ENCODE measurements at regions of chr14 and their contacts with region 1.

Region 1: GRCh38 chr14:29716150-29716549 is 211.5 kb downstream of the PRKD1 start:
- DNase-seq: no peak
- H3K4me3 ChIP-seq: no peak overlapping the region
- H3K27ac ChIP-seq: no peak overlapping the region
- H3K4me1 ChIP-seq: no peaks in the 10 kb centered on the region
- H3K27me3 ChIP-seq: no peaks in the 10 kb centered on the region
- CTCF ChIP-seq: no peak

Region 2: DNA sequence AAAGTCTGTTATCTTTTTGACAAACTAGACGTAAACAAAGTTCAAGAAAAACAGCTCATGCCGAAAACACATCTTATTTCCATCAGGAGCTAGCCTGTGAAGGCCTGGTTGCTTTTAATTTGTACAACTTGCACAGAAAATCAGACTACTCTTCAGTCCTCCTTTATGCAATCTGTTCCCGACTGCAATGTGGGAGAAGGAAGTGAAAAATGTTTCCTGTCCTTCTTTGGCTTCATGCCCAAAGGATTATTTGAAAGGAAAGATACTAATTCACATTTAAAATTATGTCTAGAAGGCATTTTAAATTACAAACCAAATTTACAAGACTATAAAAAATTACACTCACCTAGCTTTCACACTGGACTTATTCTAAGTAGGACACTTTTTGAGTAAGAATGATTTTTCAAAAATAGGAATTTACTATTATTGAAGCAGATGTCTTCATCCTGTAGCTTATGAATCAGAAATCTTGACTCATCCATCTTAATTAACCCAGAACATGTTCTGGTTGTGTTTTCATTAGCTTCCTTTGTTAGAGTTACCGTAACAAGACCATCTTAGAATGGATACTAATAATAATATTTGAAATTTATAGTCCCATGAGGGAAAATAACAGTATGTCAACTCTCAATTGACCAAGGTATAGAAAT is 61.1 kb before region 1 on chr14:
- CTCF ChIA-PET with region 1: no interaction called
- dilution Hi-C with region 1: no loop called
- in situ Hi-C with region 1: no loop called
- intact Hi-C with region 1: no loop called
- DNase-seq: peak; percentile 28
- H3K4me3 ChIP-seq: no peak overlapping the region
- H3K27ac ChIP-seq: no peak overlapping the region
- H3K4me1 ChIP-seq: no peaks in the 10 kb centered on the region
- H3K27me3 ChIP-seq: no peaks in the 10 kb centered on the region
- CTCF ChIP-seq: no peak

Region 3: DNA sequence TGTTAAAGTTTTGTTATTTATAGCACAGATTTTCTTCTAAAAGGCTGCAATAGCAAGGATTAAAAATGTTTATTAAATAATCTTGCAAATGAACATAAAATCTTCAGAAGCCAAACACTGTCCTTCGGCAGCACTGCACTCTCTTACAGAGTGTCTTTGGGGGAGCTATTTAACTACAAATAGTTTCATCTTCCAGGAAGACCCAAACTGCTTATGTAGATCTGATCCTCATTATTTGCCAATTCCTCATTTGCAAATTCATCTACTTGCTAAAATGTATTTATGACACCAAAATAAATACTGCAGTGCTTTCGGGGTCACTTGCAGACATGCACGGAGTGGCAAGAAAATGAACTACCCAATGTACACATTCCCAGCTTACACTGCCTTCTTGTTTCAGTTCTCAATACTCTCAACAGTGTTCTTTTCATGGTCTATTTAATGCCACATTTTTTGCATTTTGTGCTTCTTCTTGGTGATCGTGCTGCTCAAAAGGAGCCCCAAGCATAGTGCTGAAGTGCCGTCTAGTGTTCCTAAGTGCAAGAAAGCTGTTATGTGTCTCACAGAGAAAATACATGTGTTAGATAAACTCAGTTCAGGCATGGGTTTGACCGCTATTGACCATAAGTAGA is 83.4 kb after region 1 on chr14:
- CTCF ChIA-PET with region 1: no interaction called
- dilution Hi-C with region 1: loop called (anchors 5 kb)
- in situ Hi-C with region 1: no loop called
- intact Hi-C with region 1: no loop called
- DNase-seq: no peak
- H3K4me3 ChIP-seq: no peak overlapping the region
- H3K27ac ChIP-seq: no peak overlapping the region
- H3K4me1 ChIP-seq: no peaks in the 10 kb centered on the region
- H3K27me3 ChIP-seq: no peaks in the 10 kb centered on the region
- CTCF ChIP-seq: no peak